ENCODE measurements at regions of chr10 and their contacts with region 1.

Region 1: GRCh38 chr10:13074561-13075451 is 25.2 kb upstream of the OPTN start:
- DNase-seq: no peak
- H3K4me3 ChIP-seq: no peak overlapping the region
- H3K27ac ChIP-seq: no peak overlapping the region
- H3K4me1 ChIP-seq: peaks cover 0 to 9% (median 5%) of the 10 kb centered on the region in 4 donors
- H3K27me3 ChIP-seq: peaks cover 0 to 4% (median 0%) of the 10 kb centered on the region in 4 donors
- CTCF ChIP-seq: peak; percentile 62 to 85 (median 79)
- EP300 ChIP-seq: no peak
- POLR2A ChIP-seq: no peak

Region 2: GRCh38 chr10:12717981-12718707 is 356.7 kb before region 1 on chr10:
- intact Hi-C with region 1: loop called (anchors 5 kb)
- DNase-seq: no peak
- H3K4me3 ChIP-seq: no peak overlapping the region
- H3K27ac ChIP-seq: no peak overlapping the region
- H3K4me1 ChIP-seq: peaks cover 8 to 37% (median 30%) of the 10 kb centered on the region in 4 donors
- H3K27me3 ChIP-seq: no peaks in the 10 kb centered on the region
- CTCF ChIP-seq: peak in 2 of 3 experiments; percentile 22 to 27
- EP300 ChIP-seq: no peak
- POLR2A ChIP-seq: no peak

Region 3: DNA sequence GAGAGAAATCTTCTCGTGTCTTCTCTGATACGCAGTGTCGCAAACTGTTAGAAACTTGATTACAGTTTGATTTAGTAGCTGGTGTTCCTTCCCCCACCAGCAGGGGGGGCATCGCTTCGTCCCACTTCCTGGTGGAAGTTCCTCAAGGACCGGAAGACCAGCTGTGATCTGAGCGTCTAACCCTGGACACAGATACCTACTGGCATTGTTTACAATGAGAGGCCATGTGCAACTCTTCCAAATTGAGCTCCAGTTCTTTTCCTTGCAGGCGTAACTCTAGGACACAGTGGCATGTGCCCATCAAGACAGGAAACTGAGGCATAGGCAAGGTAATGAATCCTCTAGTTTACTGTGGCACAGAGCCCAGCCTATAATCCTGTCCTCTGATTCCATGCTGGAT is 292.3 kb before region 1 on chr10:
- intact Hi-C with region 1: loop called (anchors 10 kb)
- DNase-seq: no peak
- H3K4me3 ChIP-seq: no peak overlapping the region
- H3K27ac ChIP-seq: no peak overlapping the region
- H3K4me1 ChIP-seq: peaks cover 0 to 20% (median 18%) of the 10 kb centered on the region in 4 donors
- H3K27me3 ChIP-seq: no peaks in the 10 kb centered on the region
- CTCF ChIP-seq: peak; percentile 75 to 77 (median 75)
- EP300 ChIP-seq: no peak
- POLR2A ChIP-seq: no peak

Region 4: DNA sequence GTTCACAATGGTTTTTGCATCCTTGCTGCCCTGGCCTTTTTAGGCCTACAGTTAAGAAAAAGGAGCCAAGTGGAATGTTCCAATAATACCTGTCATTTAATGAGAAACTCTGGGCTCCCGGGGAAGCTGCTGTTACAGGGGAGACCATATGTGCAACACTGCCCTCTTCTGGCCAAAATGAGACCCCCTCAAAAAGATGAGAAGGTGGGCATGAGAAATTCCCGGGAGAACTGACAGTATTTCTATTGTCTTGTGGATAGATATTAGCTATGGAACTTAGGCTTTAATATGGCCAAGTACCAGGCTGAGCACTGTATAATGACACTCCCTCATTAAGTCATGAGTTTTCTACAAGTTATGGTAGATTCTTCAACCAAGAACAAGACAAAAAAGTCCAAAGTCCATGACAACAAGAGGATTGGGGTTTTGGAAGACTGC is 172.7 kb before region 1 on chr10:
- intact Hi-C with region 1: loop called (anchors 5 kb)
- DNase-seq: no peak
- H3K4me3 ChIP-seq: no peak overlapping the region
- H3K27ac ChIP-seq: no peak overlapping the region
- H3K4me1 ChIP-seq: peaks cover 0 to 17% (median 11%) of the 10 kb centered on the region in 4 donors
- H3K27me3 ChIP-seq: no peaks in the 10 kb centered on the region
- CTCF ChIP-seq: peak; percentile 71 to 84 (median 79)
- EP300 ChIP-seq: no peak
- POLR2A ChIP-seq: no peak

Measured in esophagus muscularis mucosa (tissue), 4 donors.